Natural killer cell (primary cell): ENCODE measurements at regions of chr6 and their contacts with region 1.

Region 1: GRCh38 chr6:6610031-6610591 is 21.6 kb downstream of the LY86 start:
- DNase-seq: peak; percentile 51 to 80
- ATAC-seq: peak; percentile 66 to 83 (median 82)
- H3K4me3 ChIP-seq: no peak overlapping the region
- H3K4me3 Mint-ChIP-seq: peak overlapping the region; percentile 53
- H3K27ac ChIP-seq: peak overlapping the region; percentile 68
- H3K27ac Mint-ChIP-seq: peak overlapping the region; percentile 83 to 84
- H3K4me1 ChIP-seq: peaks cover 57% of the 10 kb centered on the region
- H3K4me1 Mint-ChIP-seq: peaks cover 45 to 48% of the 10 kb centered on the region in 2 donors
- H3K27me3 ChIP-seq: no peaks in the 10 kb centered on the region
- H3K27me3 Mint-ChIP-seq: no peaks in the 10 kb centered on the region
- CTCF ChIP-seq: no peak

Region 2: GRCh38 chr6:6591778-6592465 is 18.2 kb before region 1 on chr6:
- intact Hi-C with region 1: loop called (anchors 1 kb)
- DNase-seq: peak in 1 of 2 donors; percentile 21
- ATAC-seq: peak; percentile 65 to 81 (median 79)
- H3K4me3 ChIP-seq: no peak overlapping the region
- H3K4me3 Mint-ChIP-seq: peak overlapping the region; percentile 7
- H3K27ac ChIP-seq: peak overlapping the region; percentile 71
- H3K27ac Mint-ChIP-seq: peak overlapping the region; percentile 71 to 81
- H3K4me1 ChIP-seq: peaks cover 53% of the 10 kb centered on the region
- H3K4me1 Mint-ChIP-seq: peaks cover 30 to 59% of the 10 kb centered on the region in 2 donors
- H3K27me3 ChIP-seq: no peaks in the 10 kb centered on the region
- H3K27me3 Mint-ChIP-seq: no peaks in the 10 kb centered on the region
- CTCF ChIP-seq: no peak

Region 3: GRCh38 chr6:6659600-6660327 is 49.7 kb after region 1 on chr6:
- intact Hi-C with region 1: loop called (anchors 2 kb)
- DNase-seq: peak in 1 of 2 donors; percentile 42
- ATAC-seq: peak in 1 of 3 donors; percentile 62
- H3K4me3 ChIP-seq: no peak overlapping the region
- H3K4me3 Mint-ChIP-seq: no peak overlapping the region
- H3K27ac ChIP-seq: peak overlapping the region; percentile 30
- H3K27ac Mint-ChIP-seq: peak overlapping the region; percentile 88 to 89
- H3K4me1 ChIP-seq: peaks cover 46% of the 10 kb centered on the region
- H3K4me1 Mint-ChIP-seq: peaks cover 45 to 74% of the 10 kb centered on the region in 2 donors
- H3K27me3 ChIP-seq: no peaks in the 10 kb centered on the region
- H3K27me3 Mint-ChIP-seq: no peaks in the 10 kb centered on the region
- CTCF ChIP-seq: no peak

Region 4: GRCh38 chr6:6840831-6841291 is 230.8 kb after region 1 on chr6:
- intact Hi-C with region 1: no loop called
- DNase-seq: no peak
- ATAC-seq: peak in 1 of 3 donors; percentile 30
- H3K4me3 ChIP-seq: no peak overlapping the region
- H3K4me3 Mint-ChIP-seq: no peak overlapping the region
- H3K27ac ChIP-seq: no peak overlapping the region
- H3K27ac Mint-ChIP-seq: no peak overlapping the region
- H3K4me1 ChIP-seq: peaks cover 12% of the 10 kb centered on the region
- H3K4me1 Mint-ChIP-seq: peaks cover 5 to 14% of the 10 kb centered on the region in 2 donors
- H3K27me3 ChIP-seq: no peaks in the 10 kb centered on the region
- H3K27me3 Mint-ChIP-seq: peaks cover 0 to 7% of the 10 kb centered on the region in 2 donors
- CTCF ChIP-seq: no peak